ENCODE measurements at regions of chr17 and their contacts with region 1.

Region 1: DNA sequence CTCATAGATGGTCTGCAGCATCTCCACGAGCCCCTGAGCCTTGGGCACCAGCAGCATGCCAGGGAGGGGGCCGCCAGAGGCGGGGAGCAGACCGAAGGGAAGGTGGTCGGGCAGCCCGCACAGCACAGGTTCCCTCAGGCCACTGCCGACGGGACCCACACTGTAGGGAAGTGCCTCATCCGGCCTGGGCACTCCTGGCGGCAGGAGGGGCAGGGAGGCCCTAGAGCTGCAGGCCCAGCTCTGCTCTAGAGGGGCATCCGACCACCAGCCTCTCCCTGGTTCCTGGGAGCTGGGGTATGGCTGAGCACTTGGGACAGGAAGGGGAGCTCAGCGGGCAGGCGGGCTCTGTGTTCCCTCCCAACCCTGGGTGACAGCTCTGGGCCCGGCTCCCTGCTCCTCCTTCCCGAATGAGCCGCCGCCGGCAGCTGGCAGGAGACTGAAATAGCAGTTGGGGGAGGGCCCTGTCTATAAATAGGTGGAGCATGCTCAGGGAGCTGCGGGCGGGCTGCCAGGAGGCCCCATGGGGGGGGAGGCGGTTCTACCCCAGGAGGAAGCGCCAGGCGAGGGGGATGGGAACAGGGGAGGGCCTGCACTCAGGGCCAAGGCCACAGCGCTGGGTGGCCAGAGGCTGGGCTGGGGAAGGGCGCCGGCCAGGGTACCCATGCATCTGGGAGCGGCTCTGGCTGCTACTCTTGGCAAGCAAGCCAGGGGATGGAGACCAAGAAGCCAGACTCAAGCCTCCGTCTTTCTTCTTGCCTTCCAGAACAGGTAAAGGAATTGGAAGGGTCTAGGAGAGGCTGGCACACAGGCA is 12.4 kb downstream of the HDAC5 start:
- H3K4me3 ChIP-seq: no peak overlapping the region
- H3K27ac ChIP-seq: peak overlapping the region; percentile 54; the same call in 1 of the 2 replicates
- H3K4me1 ChIP-seq: peaks cover 24% of the 10 kb centered on the region
- CTCF ChIP-seq: no peak

Region 2: GRCh38 chr17:44061446-44061845 is 49.6 kb before region 1 on chr17:
- CTCF ChIA-PET with region 1: interaction called, 12 read pairs
- POLR2A ChIA-PET with region 1: interaction called, 9 read pairs
- H3K4me3 ChIP-seq: no peak overlapping the region
- H3K27ac ChIP-seq: no peak overlapping the region
- H3K4me1 ChIP-seq: no peaks in the 10 kb centered on the region
- CTCF ChIP-seq: no peak

Region 3: DNA sequence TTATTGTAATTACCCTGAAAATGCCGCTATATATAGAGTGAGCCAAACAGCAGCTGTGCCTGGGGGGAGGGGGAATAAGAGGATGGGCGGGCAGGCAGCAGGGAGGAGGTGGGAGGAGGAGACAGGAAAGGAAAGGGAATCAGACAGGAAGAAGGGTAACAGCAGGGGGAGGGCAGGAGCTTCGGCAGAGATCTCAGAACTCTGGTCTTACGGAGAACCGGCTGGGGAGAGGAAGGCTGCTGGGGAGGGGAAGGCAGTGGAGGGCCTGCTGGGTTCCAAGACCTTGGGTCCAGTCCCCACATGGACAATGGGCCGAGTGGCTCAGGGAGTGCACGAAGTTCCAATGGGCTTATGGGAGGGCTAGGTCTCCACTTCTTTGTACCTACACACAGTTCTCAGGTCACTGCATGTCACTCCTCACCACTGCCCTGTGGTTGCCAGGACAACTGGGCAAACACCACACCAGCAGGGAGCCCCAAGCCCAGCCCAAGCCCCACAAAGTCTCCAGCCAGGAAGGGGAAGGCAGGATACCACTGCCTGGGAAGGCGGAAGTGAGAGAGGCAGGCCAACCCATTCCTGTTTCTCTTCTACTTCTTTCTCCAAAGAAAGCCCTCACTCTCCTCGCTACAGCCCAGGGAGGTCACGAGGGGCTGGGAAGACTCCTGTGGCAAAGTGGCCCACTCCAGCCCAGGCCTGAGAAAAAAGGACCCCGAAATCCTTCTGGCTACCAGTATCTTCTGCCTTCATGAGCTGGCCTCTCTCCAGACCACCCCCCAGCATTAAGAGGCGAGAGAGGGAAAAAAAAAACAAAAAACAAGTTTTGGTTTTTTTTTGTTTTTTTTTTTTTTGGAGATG is 15.2 kb before region 1 on chr17:
- CTCF ChIA-PET with region 1: interaction called, 33 read pairs
- POLR2A ChIA-PET with region 1: interaction called, 9 read pairs
- H3K4me3 ChIP-seq: peak overlapping the region; percentile 33
- H3K27ac ChIP-seq: peak overlapping the region; percentile 73
- H3K4me1 ChIP-seq: peaks cover 10% of the 10 kb centered on the region; the same call in 1 of the 2 replicates
- CTCF ChIP-seq: peak; percentile 84

Region 4: GRCh38 chr17:44130693-44131349 is 19.8 kb after region 1 on chr17:
- CTCF ChIA-PET with region 1: interaction called, 22 read pairs
- POLR2A ChIA-PET with region 1: interaction called, 3 read pairs
- H3K4me3 ChIP-seq: no peak overlapping the region
- H3K27ac ChIP-seq: no peak overlapping the region
- H3K4me1 ChIP-seq: no peaks in the 10 kb centered on the region
- CTCF ChIP-seq: no peak